Thyroid gland (tissue), 4 donors: ENCODE measurements at regions of chr9 and their contacts with region 1.

Region 1: DNA sequence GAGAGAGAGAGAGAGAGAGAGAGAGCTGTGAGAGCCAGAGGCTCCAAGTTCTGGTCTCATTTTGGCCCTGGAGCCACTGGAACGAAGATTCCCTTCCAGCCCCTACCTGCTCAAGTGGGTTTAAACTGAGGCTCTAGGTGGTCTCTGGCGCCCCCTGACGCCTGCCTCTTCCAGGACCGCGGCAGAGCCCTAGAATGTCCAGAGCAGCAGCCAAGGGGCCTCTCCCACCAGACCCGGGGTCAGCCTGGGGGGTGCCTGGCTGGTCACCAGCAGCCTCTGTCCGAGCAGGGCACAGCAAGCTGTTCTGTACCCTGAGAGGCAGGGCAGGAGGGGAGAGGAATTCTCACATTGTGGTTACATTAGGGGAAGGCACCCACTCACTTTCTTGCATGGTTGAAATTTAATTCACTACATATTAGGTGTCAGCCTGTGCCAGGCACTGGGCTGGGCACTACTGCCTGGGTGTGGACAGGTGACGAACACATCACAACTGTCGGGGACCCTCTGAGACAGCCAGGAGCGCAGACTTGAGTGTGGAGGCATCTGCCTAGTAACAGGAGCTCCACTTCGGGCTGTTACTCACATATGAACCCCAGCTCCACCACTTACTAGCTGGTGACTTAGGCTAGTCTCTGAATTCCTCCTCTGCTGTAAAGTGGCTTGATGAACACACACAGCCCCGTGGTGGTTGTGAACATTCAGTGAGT is 44.5 kb downstream of the AMBP start:
- DNase-seq: peak in 1 of 2 donors; percentile 12
- H3K4me3 ChIP-seq: no peak overlapping the region
- H3K27ac ChIP-seq: no peak overlapping the region
- H3K4me1 ChIP-seq: peaks cover 2 to 8% of the 10 kb centered on the region in 2 donors
- H3K27me3 ChIP-seq: no peaks in the 10 kb centered on the region
- CTCF ChIP-seq: peak in 5 of 6 experiments; percentile 11 to 36 (median 25)
- POLR2A ChIP-seq: no peak

Region 2: GRCh38 chr9:113807173-113808061 is 226.1 kb before region 1 on chr9:
- intact Hi-C with region 1: loop called (anchors 10 kb)
- DNase-seq: peak; percentile 44 to 55
- H3K4me3 ChIP-seq: no peak overlapping the region
- H3K27ac ChIP-seq: no peak overlapping the region
- H3K4me1 ChIP-seq: peaks cover 0 to 4% of the 10 kb centered on the region in 2 donors
- H3K27me3 ChIP-seq: no peaks in the 10 kb centered on the region
- CTCF ChIP-seq: peak; percentile 71 to 91 (median 84)
- POLR2A ChIP-seq: no peak